Activated T-helper 2 cell treated with anti-CD3 and anti-CD28 coated beads, Interferon-gamma antibody, Interleukin-2, Interleukin-4, amounts not matched to agents 10 μg/mL and 5 μg/mL and 100 μg/mL, durations not matched to agents 14 hours and 24 hours and 36 hours (primary cell): ENCODE measurements at regions of chr4 and their contacts with region 1.

Region 1: DNA sequence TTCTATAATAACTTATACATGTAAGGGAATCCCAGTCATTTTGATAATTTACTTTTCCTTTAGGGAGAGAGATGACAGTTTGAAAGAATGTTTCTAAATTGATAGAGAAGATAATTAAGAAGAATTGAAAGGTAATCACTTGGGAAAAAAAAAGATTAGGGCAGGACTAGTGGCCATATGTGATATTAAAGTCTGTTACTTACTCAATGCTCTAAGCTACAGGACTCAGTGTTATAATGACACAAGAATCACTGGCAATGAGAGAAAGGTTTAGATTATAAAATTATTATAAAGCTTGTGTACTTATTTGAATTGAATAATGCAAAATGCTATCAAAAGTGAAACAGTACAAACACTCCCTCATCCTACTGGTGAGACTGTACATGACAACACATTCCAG is 265.3 kb downstream of the BANK1 start:
- DNase-seq: no peak
- H3K4me3 Mint-ChIP-seq: no peak overlapping the region
- H3K27ac Mint-ChIP-seq: no peak overlapping the region
- H3K4me1 Mint-ChIP-seq: peaks cover 3% of the 10 kb centered on the region
- H3K27me3 Mint-ChIP-seq: peaks cover 9% of the 10 kb centered on the region

Region 2: GRCh38 chr4:101967697-101968368 is 88.0 kb before region 1 on chr4:
- intact Hi-C with region 1: loop called (anchors 5 kb)
- DNase-seq: no peak
- H3K4me3 Mint-ChIP-seq: no peak overlapping the region
- H3K27ac Mint-ChIP-seq: no peak overlapping the region
- H3K4me1 Mint-ChIP-seq: no peaks in the 10 kb centered on the region
- H3K27me3 Mint-ChIP-seq: no peaks in the 10 kb centered on the region

Region 3: DNA sequence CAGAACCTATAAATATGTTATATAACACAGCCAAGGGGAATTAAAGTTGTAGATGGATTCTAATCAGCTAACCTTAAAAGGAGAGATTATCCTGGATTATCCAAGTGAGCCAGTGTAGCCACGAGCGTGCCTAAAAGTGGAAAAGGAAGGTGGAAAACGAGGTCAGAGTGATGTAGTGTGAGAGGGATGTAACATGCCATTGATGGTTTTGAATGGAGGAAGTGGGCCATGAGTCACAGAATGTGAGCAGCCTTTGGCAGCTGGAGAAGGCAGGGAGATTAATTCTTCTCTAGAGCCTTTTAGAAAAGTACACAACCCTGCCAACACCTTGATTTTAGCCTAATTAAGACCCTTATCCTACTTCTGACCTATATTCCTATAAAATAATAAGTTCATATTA is 140.4 kb after region 1 on chr4:
- intact Hi-C with region 1: no loop called
- DNase-seq: no peak
- H3K4me3 Mint-ChIP-seq: no peak overlapping the region
- H3K27ac Mint-ChIP-seq: no peak overlapping the region
- H3K4me1 Mint-ChIP-seq: no peaks in the 10 kb centered on the region
- H3K27me3 Mint-ChIP-seq: peaks cover 6% of the 10 kb centered on the region